ENCODE measurements at regions of chr20 and their contacts with region 1.

Region 1: DNA sequence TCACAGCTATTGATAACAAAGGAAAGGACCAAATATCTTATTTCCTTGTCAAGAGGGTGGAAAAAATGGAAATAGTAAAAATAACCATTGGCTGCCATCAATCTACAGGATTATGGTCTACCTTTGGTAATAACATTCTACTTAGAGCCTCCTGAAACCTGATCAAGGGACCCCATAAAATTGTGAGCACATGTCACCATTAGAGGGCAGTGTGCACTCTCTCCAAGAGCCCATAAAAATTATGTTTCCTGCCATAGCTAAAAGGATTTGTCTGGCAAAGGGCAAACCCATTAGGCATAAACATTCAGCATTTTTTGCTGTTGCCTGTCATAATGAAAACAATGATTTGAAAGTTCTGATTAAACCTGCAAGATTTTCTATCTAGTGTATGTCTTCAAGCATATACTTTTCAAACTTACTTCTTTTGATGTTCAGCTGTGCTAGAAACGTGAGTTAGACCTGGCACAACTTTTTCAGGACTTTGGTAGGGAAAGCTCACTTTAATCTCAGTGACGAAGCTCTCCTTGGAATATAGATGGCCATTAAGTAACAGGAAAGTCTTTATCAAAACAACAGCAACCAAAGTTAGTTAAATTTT is 120.7 kb upstream of the ZFP64 start:
- DNase-seq: peak; percentile 60
- H3K4me3 Mint-ChIP-seq: no peak overlapping the region
- H3K27ac Mint-ChIP-seq: no peak overlapping the region
- H3K4me1 Mint-ChIP-seq: peaks cover 14% of the 10 kb centered on the region
- H3K27me3 Mint-ChIP-seq: no peaks in the 10 kb centered on the region

Region 2: GRCh38 chr20:52191132-52191915 is 120.9 kb before region 1 on chr20 and contains the start of gene ZFP64:
- CTCF ChIA-PET with region 1: no interaction called
- POLR2A ChIA-PET with region 1: no interaction called
- intact Hi-C with region 1: loop called (anchors 1 kb)
- DNase-seq: peak; percentile 77
- H3K4me3 Mint-ChIP-seq: peak within 1 kb of the TSS; percentile 92
- H3K27ac Mint-ChIP-seq: peak within 1 kb of the TSS; percentile 91
- H3K4me1 Mint-ChIP-seq: peaks cover 20% of the 10 kb centered on the region
- H3K27me3 Mint-ChIP-seq: no peaks in the 10 kb centered on the region
- total RNA-seq, gene ZFP64: 9.2 to 11.8 TPM

Region 3: DNA sequence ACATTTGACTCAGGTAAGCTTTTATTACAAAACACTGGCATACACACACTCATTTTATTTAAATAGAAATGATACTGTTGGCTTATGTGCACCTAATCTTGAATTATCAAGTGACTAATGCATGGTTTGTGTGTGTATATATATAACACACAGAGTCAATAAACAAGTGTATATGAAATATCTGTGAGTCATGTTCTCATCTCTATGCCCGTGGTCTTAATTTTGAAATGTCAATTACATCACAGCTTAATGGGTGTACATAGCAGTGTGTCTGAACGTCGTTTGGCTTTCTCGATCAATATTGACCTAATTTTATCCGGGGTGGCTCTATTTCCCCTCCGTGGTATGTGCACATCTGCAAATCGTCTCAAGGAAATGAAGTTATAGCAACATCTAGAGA is 16.7 kb before region 1 on chr20:
- CTCF ChIA-PET with region 1: interaction called, 14 read pairs
- POLR2A ChIA-PET with region 1: no interaction called
- intact Hi-C with region 1: no loop called
- DNase-seq: no peak
- H3K4me3 Mint-ChIP-seq: no peak overlapping the region
- H3K27ac Mint-ChIP-seq: no peak overlapping the region
- H3K4me1 Mint-ChIP-seq: no peaks in the 10 kb centered on the region
- H3K27me3 Mint-ChIP-seq: no peaks in the 10 kb centered on the region

Region 4: GRCh38 chr20:52365698-52366097 is 53.5 kb after region 1 on chr20:
- CTCF ChIA-PET with region 1: no interaction called
- POLR2A ChIA-PET with region 1: no interaction called
- intact Hi-C with region 1: no loop called
- DNase-seq: no peak
- H3K4me3 Mint-ChIP-seq: no peak overlapping the region
- H3K27ac Mint-ChIP-seq: no peak overlapping the region
- H3K4me1 Mint-ChIP-seq: peaks cover 8% of the 10 kb centered on the region
- H3K27me3 Mint-ChIP-seq: no peaks in the 10 kb centered on the region

Region 5: GRCh38 chr20:52494244-52494643 is 182.0 kb after region 1 on chr20:
- CTCF ChIA-PET with region 1: no interaction called
- POLR2A ChIA-PET with region 1: no interaction called
- intact Hi-C with region 1: loop called (anchors 10 kb)
- DNase-seq: peak; percentile 73
- H3K4me3 Mint-ChIP-seq: no peak overlapping the region
- H3K27ac Mint-ChIP-seq: no peak overlapping the region
- H3K4me1 Mint-ChIP-seq: peaks cover 17% of the 10 kb centered on the region
- H3K27me3 Mint-ChIP-seq: no peaks in the 10 kb centered on the region

Region 6: GRCh38 chr20:53547664-53548239 is 1235.5 kb after region 1 on chr20:
- CTCF ChIA-PET with region 1: interaction called, 17 read pairs
- POLR2A ChIA-PET with region 1: no interaction called
- intact Hi-C with region 1: loop called (anchors 1 kb)
- DNase-seq: peak; percentile 39
- H3K4me3 Mint-ChIP-seq: no peak overlapping the region
- H3K27ac Mint-ChIP-seq: no peak overlapping the region
- H3K4me1 Mint-ChIP-seq: no peaks in the 10 kb centered on the region
- H3K27me3 Mint-ChIP-seq: no peaks in the 10 kb centered on the region

Measured in activated CD4-positive, alpha-beta memory T cell treated with anti-CD3 and anti-CD28 coated beads for 36 hours (primary cell).